ENCODE measurements at regions of chr4 and their contacts with region 1.

Region 1: GRCh38 chr4:109702950-109703663 is at the start of gene CASP6:
- DNase-seq: peak; percentile 68
- H3K4me3 Mint-ChIP-seq: peak within 1 kb of the TSS; percentile 85
- H3K27ac Mint-ChIP-seq: peak within 1 kb of the TSS; percentile 93
- H3K4me1 Mint-ChIP-seq: peaks cover 45% of the 10 kb centered on the region
- H3K27me3 Mint-ChIP-seq: no peaks in the 10 kb centered on the region
- total RNA-seq, gene CASP6: 29.5 and 32.9 TPM in 2 replicates

Region 2: DNA sequence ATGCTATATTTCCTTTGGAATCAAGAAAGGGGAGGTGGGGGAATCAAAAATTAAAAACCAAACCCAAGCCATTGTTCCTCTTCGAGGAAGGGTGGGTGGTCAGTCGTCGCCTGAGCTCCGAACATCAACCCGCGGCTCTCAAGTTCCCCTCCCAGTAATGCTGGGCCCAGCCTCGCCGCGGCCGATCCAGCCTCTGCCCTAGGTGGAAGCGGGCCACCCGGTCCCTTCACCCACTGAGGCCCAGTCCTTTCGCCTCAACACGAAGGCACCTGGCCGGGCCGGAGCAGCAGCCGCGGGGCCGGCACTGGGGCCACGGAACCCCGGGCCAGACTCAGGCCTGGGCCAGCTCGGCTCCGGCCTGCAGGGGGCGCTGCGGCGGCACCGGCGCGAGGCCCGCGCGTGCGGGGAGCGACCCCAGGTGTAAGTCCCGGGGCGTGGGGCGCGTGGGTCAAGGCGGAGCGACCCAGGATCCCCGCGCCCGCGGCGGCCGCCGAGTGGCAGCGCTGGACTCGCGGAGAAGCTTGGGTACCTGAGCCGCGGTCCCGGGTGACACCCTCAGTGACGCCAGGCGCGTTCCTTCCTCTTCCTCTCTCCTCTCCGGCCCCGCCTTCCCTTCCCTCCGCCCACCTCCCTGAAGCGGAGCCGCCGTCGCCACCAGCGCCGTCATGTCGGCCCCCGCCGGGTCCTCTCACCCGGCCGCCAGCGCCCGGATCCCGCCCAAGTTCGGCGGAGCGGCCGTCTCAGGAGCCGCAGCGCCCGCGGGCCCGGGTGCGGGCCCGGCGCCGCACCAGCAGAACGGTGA is 269.7 kb before region 1 on chr4 and contains the start of gene SEC24B:
- intact Hi-C with region 1: loop called (anchors 1 kb)
- DNase-seq: peak; percentile 86
- H3K4me3 Mint-ChIP-seq: peak within 1 kb of the TSS; percentile 87
- H3K27ac Mint-ChIP-seq: peak within 1 kb of the TSS; percentile 79
- H3K4me1 Mint-ChIP-seq: peaks cover 57% of the 10 kb centered on the region
- H3K27me3 Mint-ChIP-seq: no peaks in the 10 kb centered on the region
- total RNA-seq, gene SEC24B: 32.5 and 34.0 TPM in 2 replicates

Region 3: DNA sequence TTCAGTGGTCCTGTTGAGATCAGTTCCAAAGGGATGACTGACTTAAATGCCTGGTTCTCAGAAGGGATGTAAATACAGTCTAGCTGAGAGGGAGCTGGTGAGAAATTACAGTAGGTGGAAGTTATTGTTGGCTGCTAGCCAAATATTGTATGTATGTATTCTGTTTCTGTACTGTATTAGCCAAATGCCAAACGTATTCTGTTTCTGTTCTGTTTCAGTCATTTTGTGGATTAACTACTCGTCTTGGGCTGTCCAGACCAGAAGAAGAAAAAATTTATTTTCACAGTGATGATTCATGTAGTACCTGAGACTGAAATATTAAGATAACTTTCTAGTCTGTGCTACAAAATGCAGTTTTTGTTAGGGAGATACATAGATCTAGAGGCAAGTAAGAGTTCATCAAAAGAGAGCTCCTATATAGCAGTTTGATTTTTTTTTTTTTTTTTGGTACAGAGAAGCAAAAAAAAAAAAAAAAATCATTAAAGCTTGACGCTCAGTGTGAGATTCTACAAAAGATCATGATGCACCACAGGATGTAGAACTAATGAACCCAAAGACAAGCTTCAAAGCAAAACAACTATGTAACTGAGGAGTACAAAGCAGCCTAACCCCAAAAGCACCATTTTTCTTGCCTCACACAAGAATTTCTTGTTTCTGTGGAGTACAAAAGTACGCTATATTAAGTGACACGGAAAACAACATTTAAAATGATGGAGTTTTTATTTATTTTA is 54.7 kb before region 1 on chr4:
- intact Hi-C with region 1: loop called (anchors 1 kb)
- DNase-seq: no peak
- H3K4me3 Mint-ChIP-seq: peak overlapping the region; percentile 69
- H3K27ac Mint-ChIP-seq: peak overlapping the region; percentile 84
- H3K4me1 Mint-ChIP-seq: peaks cover 8% of the 10 kb centered on the region
- H3K27me3 Mint-ChIP-seq: no peaks in the 10 kb centered on the region

Region 4: DNA sequence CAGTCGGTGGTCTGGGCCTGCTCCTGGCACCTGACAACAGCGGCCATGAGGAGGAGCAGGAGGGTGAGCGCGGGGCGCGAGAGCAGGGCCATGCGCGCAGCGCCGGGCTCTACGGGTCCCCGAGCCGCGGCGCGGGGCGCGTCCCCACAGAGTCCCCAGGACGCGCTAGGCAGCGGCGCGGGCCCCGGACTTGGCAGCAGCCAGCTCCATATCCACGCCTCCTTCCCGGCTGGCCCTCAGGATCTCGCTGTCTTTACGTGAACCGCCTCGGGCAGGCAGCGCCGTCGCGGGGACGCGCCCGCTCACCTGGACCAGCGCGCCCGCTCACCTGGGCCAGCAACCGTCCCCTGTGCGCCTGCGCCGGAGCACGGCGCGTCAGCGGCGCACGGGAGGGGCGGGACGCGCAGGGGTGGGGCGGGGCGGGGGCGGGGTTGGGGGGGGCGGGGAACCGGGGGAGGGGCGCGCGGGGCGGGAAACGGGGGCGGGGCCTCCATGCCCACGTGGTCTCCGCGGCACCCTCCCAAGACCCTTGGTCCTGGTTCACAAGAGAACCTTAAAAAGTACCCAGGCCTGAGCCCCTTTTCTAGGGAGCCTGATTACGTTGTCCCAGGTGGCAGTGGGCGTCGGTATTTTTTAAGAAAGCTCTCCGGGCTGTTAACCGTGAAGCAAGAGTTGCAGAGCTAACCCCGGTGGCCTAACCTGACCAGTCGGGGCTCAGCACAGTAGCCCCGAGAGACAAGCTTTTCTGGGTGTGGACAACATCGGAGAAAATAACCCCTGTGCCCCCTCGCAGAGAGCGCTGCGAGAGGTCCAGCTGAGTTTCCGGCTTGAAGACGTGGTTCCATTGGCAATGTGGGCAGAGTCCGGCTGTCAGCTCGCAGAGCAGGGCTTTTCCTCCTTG is 26.9 kb after region 1 on chr4 and contains the start of gene PLA2G12A:
- intact Hi-C with region 1: loop called (anchors 1 kb)
- DNase-seq: peak; percentile 68
- H3K4me3 Mint-ChIP-seq: peak within 1 kb of the TSS; percentile 84
- H3K27ac Mint-ChIP-seq: peak within 1 kb of the TSS; percentile 62
- H3K4me1 Mint-ChIP-seq: peaks cover 19% of the 10 kb centered on the region
- H3K27me3 Mint-ChIP-seq: peaks cover 2% of the 10 kb centered on the region
- total RNA-seq, gene PLA2G12A: 11.3 and 13.1 TPM in 2 replicates